Astrocyte of the cerebellum (primary cell): ENCODE measurements at regions of chr11 and their contacts with region 1.

Region 1: DNA sequence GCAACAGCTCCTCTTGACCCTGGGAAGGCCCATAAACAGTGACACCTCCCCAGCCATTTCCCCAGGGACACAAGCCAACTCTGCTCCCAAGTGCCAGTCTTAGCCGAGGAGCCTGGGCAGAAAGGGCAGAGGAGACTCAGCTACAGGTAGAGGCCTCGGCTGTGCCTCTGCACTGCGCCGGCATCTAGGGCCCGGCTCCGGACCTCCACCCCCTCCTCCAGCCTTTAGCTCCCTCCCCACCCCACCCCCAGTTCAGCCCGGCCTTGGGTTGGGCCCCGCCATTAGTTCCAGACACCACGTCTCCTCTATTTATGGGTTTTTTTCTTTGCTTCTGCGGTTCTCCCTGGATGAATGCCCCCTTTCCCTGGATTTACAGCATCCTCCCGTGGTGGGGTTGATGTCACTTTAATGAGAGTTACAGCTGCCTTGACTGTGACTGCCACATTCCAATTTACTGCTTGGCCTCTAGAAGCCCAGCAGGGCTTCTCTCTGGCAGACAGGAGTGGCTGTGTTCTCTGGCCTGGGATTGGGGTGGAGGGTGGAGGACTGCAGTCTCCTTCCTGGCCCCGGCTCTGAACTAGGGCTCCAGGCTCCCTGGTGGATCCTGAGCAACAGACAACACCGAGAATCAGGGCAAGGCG is 13.5 kb upstream of the OAF start:
- DNase-seq: no peak
- H3K4me3 ChIP-seq: no peak overlapping the region
- CTCF ChIP-seq: no peak

Region 2: GRCh38 chr11:120254788-120255518 is 57.6 kb after region 1 on chr11:
- in situ Hi-C with region 1: loop called (anchors 5 kb)
- DNase-seq: no peak
- H3K4me3 ChIP-seq: no peak overlapping the region
- CTCF ChIP-seq: no peak

Region 3: GRCh38 chr11:120547811-120548681 is 350.7 kb after region 1 on chr11:
- in situ Hi-C with region 1: no loop called
- DNase-seq: peak; percentile 74
- H3K4me3 ChIP-seq: no peak overlapping the region
- CTCF ChIP-seq: no peak